Left ventricle myocardium superior (tissue), 1 donor: ENCODE measurements at regions of chr13 and their contacts with region 1.

Region 1: GRCh38 chr13:50081679-50082425 is 66.6 kb downstream of the KCNRG start:
- DNase-seq: peak; percentile 97
- ATAC-seq: peak; percentile 96

Region 2: GRCh38 chr13:49792550-49793324 is 289.1 kb before region 1 on chr13 and contains the start of gene KPNA3:
- intact Hi-C with region 1: no loop called
- DNase-seq: peak; percentile 98
- ATAC-seq: peak; percentile 96
- total RNA-seq, gene KPNA3: 61.8 TPM

Region 3: GRCh38 chr13:49996951-49997895 is 84.6 kb before region 1 on chr13 and contains the start of gene TRIM13:
- intact Hi-C with region 1: loop called (anchors 10 kb)
- DNase-seq: peak; percentile 95
- ATAC-seq: peak; percentile 89
- total RNA-seq, gene TRIM13: 26.0 TPM

Region 4: GRCh38 chr13:50123862-50124536 is 42.1 kb after region 1 on chr13:
- intact Hi-C with region 1: loop called (anchors 5 kb)
- DNase-seq: no peak
- ATAC-seq: peak; percentile 89